CD14-positive monocyte (primary cell): ENCODE measurements at regions of chr7 and their contacts with region 1.

Region 1: DNA sequence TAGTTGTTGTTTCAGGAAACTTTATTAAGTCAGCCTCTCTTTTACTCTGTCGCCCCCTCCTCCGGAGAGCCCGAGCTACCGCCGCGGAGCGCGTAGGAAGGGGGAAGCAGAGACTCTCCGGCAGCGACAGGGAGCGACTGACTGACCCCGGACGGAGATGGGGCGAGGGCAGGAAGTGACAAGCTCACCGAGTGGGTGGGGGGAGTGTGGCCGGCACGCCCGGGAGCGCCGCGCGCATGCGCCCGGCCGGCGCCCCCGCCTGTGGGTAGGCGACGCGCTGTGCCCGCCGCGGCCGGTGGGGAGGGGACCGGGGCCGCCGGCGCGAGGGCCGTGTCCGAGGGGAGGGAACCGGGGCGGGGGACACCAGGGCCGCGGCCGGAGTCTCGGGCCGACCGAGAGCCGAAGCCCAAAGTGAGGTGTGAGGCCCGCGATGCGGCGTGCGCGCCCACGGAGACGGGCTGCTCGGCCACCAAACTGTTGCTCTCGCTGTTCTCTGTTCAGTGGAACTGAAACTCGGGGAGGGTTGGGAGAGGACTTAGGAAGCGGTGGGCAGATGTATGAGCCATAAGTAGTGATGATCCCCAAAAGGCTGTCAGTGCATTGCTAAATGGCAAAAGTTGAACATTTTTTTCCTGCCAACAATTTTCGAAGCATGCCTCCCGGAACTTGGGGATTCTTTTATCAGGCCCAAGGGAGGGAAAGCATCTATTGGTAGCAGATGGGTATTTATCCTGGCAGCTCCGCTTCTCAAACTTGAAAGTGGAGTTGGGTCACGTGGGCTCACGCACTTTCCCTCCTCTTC is at the start of gene ZNF800:
- DNase-seq: peak; percentile 89 to 93 (median 90)
- H3K4me3 ChIP-seq: peak within 1 kb of the TSS; percentile 85 to 96 (median 93)
- H3K4me3 Mint-ChIP-seq: peak within 1 kb of the TSS; percentile 99 to 100
- H3K27ac ChIP-seq: peak within 1 kb of the TSS; percentile 97 to 98
- H3K27ac Mint-ChIP-seq: peak within 1 kb of the TSS; percentile 92 to 99 (median 97)
- H3K4me1 ChIP-seq: peaks cover 16 to 26% of the 10 kb centered on the region in 2 donors
- H3K4me1 Mint-ChIP-seq: peaks cover 56% of the 10 kb centered on the region
- H3K27me3 ChIP-seq: peaks cover 2 to 13% of the 10 kb centered on the region in 2 donors
- H3K27me3 Mint-ChIP-seq: peaks cover 10 to 21% (median 19%) of the 10 kb centered on the region in 3 donors
- CTCF ChIP-seq: no peak
- polyA plus RNA-seq, gene ZNF800: 11.8 to 19.6 (median 16.2) TPM

Region 2: GRCh38 chr7:127258111-127258510 is 134.7 kb before region 1 on chr7:
- intact Hi-C with region 1: no loop called
- DNase-seq: no peak
- H3K4me3 ChIP-seq: no peak overlapping the region
- H3K4me3 Mint-ChIP-seq: no peak overlapping the region
- H3K27ac ChIP-seq: no peak overlapping the region
- H3K27ac Mint-ChIP-seq: no peak overlapping the region
- H3K4me1 ChIP-seq: peaks cover under 1 to 4% of the 10 kb centered on the region in 2 donors
- H3K4me1 Mint-ChIP-seq: peaks cover 6% of the 10 kb centered on the region
- H3K27me3 ChIP-seq: peaks cover 19 to 51% of the 10 kb centered on the region in 2 donors
- H3K27me3 Mint-ChIP-seq: peaks cover 25 to 47% (median 34%) of the 10 kb centered on the region in 3 donors
- CTCF ChIP-seq: no peak

Region 3: DNA sequence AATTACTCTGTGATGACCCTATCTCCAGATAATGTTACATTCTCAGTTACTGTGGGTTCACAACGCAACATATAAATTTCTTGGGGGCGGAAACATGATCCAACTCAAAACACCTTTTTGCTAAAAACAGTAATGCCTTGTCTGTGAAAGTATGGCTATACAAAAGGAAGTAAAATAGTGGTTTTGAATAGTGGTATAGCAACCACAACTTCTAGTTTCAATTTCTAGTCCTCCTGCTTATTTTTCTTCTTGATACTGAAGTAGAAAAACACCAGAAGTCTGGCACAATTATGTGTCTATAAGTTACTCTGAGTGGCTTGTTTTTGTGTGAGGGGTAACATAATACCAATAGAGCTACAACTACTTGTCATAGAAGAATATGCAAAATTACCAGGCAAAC is 21.2 kb after region 1 on chr7:
- intact Hi-C with region 1: no loop called
- DNase-seq: peak in 1 of 3 donors; percentile 19
- H3K4me3 ChIP-seq: no peak overlapping the region
- H3K4me3 Mint-ChIP-seq: peak overlapping the region in 1 of 2 donors; percentile 66
- H3K27ac ChIP-seq: no peak overlapping the region
- H3K27ac Mint-ChIP-seq: peak overlapping the region in 3 of 7 donors; percentile 39 to 75 (median 64)
- H3K4me1 ChIP-seq: peaks cover 18 to 21% of the 10 kb centered on the region in 2 donors
- H3K4me1 Mint-ChIP-seq: peaks cover 34% of the 10 kb centered on the region
- H3K27me3 ChIP-seq: peaks cover 55 to 71% of the 10 kb centered on the region in 2 donors
- H3K27me3 Mint-ChIP-seq: peaks cover 41 to 72% (median 55%) of the 10 kb centered on the region in 3 donors
- CTCF ChIP-seq: no peak

Region 4: GRCh38 chr7:127447326-127447945 is 54.7 kb after region 1 on chr7:
- intact Hi-C with region 1: no loop called
- DNase-seq: peak; percentile 39 to 59 (median 59)
- H3K4me3 ChIP-seq: no peak overlapping the region
- H3K4me3 Mint-ChIP-seq: no peak overlapping the region
- H3K27ac ChIP-seq: no peak overlapping the region
- H3K27ac Mint-ChIP-seq: no peak overlapping the region
- H3K4me1 ChIP-seq: no peaks in the 10 kb centered on the region
- H3K4me1 Mint-ChIP-seq: no peaks in the 10 kb centered on the region
- H3K27me3 ChIP-seq: peaks cover 0 to 5% of the 10 kb centered on the region in 2 donors
- H3K27me3 Mint-ChIP-seq: peaks cover 25 to 47% (median 34%) of the 10 kb centered on the region in 3 donors
- CTCF ChIP-seq: peak; percentile 79

Region 5: GRCh38 chr7:127585044-127585953 is 192.5 kb after region 1 on chr7 and contains the start of gene GCC1:
- intact Hi-C with region 1: loop called (anchors 5 kb)
- DNase-seq: peak; percentile 82 to 89 (median 88)
- H3K4me3 ChIP-seq: peak within 1 kb of the TSS; percentile 64 to 91 (median 88)
- H3K4me3 Mint-ChIP-seq: peak within 1 kb of the TSS; percentile 91 to 93
- H3K27ac ChIP-seq: peak within 1 kb of the TSS; percentile 76 to 90
- H3K27ac Mint-ChIP-seq: peak within 1 kb of the TSS; percentile 89 to 97 (median 92)
- H3K4me1 ChIP-seq: peaks cover 53 to 65% of the 10 kb centered on the region in 2 donors
- H3K4me1 Mint-ChIP-seq: peaks cover 70% of the 10 kb centered on the region
- H3K27me3 ChIP-seq: no peaks in the 10 kb centered on the region
- H3K27me3 Mint-ChIP-seq: no peaks in the 10 kb centered on the region
- CTCF ChIP-seq: no peak
- polyA plus RNA-seq, gene GCC1: 5.9 to 9.2 (median 6.4) TPM